T-cell (primary cell): ENCODE measurements at regions of chr18 and their contacts with region 1.

Region 1: DNA sequence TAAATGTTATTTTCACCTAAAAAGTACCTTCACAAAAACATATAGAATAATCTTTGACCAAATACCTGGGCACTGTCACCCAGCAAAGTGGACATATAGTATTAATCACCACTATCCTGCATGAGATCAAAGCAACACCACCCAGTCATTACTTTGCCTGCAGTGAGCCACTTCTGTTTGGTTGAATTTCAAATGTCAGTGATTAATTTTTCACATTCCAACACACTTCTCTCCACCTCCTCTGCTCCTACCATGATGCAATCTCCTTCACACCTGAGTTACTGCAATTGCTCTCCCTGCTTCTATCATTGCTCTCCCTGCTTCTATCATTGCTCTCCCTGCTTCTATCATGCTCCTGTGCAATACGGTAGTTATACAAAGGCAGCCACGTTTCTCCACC is 106.0 kb upstream of the NETO1 start:
- DNase-seq: no peak
- ATAC-seq: no peak
- H3K4me3 ChIP-seq: no peak overlapping the region
- H3K4me3 Mint-ChIP-seq: no peak overlapping the region
- H3K27ac ChIP-seq: no peak overlapping the region
- H3K27ac Mint-ChIP-seq: no peak overlapping the region
- H3K4me1 ChIP-seq: no peaks in the 10 kb centered on the region
- H3K4me1 Mint-ChIP-seq: no peaks in the 10 kb centered on the region
- H3K27me3 ChIP-seq: no peaks in the 10 kb centered on the region
- H3K27me3 Mint-ChIP-seq: no peaks in the 10 kb centered on the region

Region 2: GRCh38 chr18:72859088-72859487 is 114.7 kb before region 1 on chr18:
- CTCF ChIA-PET with region 1: no interaction called
- POLR2A ChIA-PET with region 1: interaction called in 1 of 2 experiments, 10 read pairs
- DNase-seq: no peak
- ATAC-seq: no peak
- H3K4me3 ChIP-seq: no peak overlapping the region
- H3K4me3 Mint-ChIP-seq: no peak overlapping the region
- H3K27ac ChIP-seq: no peak overlapping the region
- H3K27ac Mint-ChIP-seq: no peak overlapping the region
- H3K4me1 ChIP-seq: no peaks in the 10 kb centered on the region
- H3K4me1 Mint-ChIP-seq: no peaks in the 10 kb centered on the region
- H3K27me3 ChIP-seq: no peaks in the 10 kb centered on the region
- H3K27me3 Mint-ChIP-seq: peaks cover 0 to 3% of the 10 kb centered on the region in 2 donors

Region 3: GRCh38 chr18:72878143-72878542 is 95.7 kb before region 1 on chr18:
- CTCF ChIA-PET with region 1: no interaction called
- POLR2A ChIA-PET with region 1: no interaction called
- DNase-seq: no peak
- ATAC-seq: no peak
- H3K4me3 ChIP-seq: no peak overlapping the region
- H3K4me3 Mint-ChIP-seq: no peak overlapping the region
- H3K27ac ChIP-seq: no peak overlapping the region
- H3K27ac Mint-ChIP-seq: no peak overlapping the region
- H3K4me1 ChIP-seq: no peaks in the 10 kb centered on the region
- H3K4me1 Mint-ChIP-seq: no peaks in the 10 kb centered on the region
- H3K27me3 ChIP-seq: no peaks in the 10 kb centered on the region
- H3K27me3 Mint-ChIP-seq: no peaks in the 10 kb centered on the region

Region 4: GRCh38 chr18:72985686-72986085 is 11.9 kb after region 1 on chr18:
- CTCF ChIA-PET with region 1: no interaction called
- POLR2A ChIA-PET with region 1: no interaction called
- DNase-seq: no peak
- ATAC-seq: no peak
- H3K4me3 ChIP-seq: no peak overlapping the region
- H3K4me3 Mint-ChIP-seq: no peak overlapping the region
- H3K27ac ChIP-seq: no peak overlapping the region
- H3K27ac Mint-ChIP-seq: no peak overlapping the region
- H3K4me1 ChIP-seq: no peaks in the 10 kb centered on the region
- H3K4me1 Mint-ChIP-seq: no peaks in the 10 kb centered on the region
- H3K27me3 ChIP-seq: no peaks in the 10 kb centered on the region
- H3K27me3 Mint-ChIP-seq: no peaks in the 10 kb centered on the region

Region 5: GRCh38 chr18:73038336-73038735 is 64.5 kb after region 1 on chr18:
- CTCF ChIA-PET with region 1: no interaction called
- POLR2A ChIA-PET with region 1: no interaction called
- DNase-seq: no peak
- ATAC-seq: no peak
- H3K4me3 ChIP-seq: no peak overlapping the region
- H3K4me3 Mint-ChIP-seq: no peak overlapping the region
- H3K27ac ChIP-seq: no peak overlapping the region
- H3K27ac Mint-ChIP-seq: no peak overlapping the region
- H3K4me1 ChIP-seq: no peaks in the 10 kb centered on the region
- H3K4me1 Mint-ChIP-seq: peaks cover 0 to 4% (median 0%) of the 10 kb centered on the region in 3 donors
- H3K27me3 ChIP-seq: no peaks in the 10 kb centered on the region
- H3K27me3 Mint-ChIP-seq: no peaks in the 10 kb centered on the region